AG04449 (cell line): ENCODE measurements at regions of chr6 and their contacts with region 1.

Region 1: GRCh38 chr6:139219271-139219729 is 72.5 kb downstream of the TXLNB start:
- DNase-seq: peak; percentile 82
- H3K4me3 ChIP-seq: no peak overlapping the region
- CTCF ChIP-seq: peak; percentile 94

Region 2: DNA sequence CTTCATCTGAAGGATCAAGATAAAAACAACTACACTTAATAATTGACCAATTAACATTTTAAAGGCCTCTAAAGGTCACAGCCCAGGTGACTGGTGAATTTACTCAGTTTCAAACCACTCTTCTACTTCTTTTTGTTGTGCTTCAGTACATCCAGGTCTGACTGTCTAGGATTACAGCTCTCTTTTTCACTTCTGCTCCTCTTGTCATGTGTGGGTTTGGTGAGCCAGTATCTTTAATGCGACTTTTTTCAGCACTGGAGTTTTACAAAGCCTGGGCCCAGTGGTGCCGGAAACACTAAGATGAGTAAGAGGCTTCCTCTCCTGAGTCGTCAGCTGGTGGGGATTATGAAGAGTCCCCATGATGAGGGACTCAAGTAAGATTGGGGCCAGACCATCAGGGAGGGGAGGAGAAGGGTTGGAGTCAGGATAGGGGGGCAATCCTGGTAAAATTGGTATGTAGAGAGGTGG is 57.4 kb before region 1 on chr6:
- CTCF ChIA-PET with region 1: no interaction called
- POLR2A ChIA-PET with region 1: no interaction called
- DNase-seq: no peak
- H3K4me3 ChIP-seq: no peak overlapping the region
- CTCF ChIP-seq: no peak

Region 3: GRCh38 chr6:139230391-139230840 is 11.1 kb after region 1 on chr6:
- CTCF ChIA-PET with region 1: interaction called, 12 read pairs
- POLR2A ChIA-PET with region 1: interaction called, 3 read pairs
- DNase-seq: peak; percentile 4
- H3K4me3 ChIP-seq: no peak overlapping the region
- CTCF ChIP-seq: no peak

Region 4: DNA sequence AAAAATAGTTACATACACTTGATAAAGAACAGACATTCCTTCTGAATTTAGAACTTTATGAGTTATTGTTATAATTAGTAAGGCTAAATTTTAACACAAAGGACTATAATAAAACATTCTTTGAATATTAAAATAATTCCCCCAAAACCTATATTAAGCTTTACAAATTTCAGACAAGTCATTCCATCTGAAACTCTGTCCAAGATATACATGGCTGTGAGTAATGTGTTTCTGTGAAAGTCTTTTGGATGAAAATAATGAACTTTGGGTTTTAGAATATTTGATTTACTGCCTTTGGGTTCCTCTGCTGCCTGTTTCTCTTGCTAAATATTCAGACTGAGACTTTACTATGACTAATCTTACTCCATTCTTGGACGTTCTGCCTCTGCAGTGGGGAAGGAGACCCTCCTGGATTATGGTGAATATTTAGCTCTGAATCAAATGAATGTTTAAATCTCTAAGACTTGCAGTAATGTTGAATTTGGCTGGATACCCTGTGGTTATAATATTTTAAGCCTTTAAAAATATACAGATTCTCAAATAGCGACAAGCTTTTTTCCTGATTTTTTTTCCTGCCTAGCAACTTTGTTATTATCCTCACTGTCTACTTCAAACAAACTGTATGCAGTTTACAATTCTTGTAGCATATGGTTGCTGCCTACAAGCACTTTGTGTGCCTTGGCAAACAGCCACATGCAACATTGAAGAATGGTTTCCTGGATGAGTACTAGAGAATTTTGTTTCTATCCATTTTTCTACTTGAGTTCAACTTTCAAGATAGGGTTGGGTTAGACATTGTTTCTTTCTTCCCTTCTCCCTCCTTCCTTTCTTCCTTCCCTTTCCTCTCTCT is 21.1 kb after region 1 on chr6:
- CTCF ChIA-PET with region 1: interaction called, 13 read pairs
- POLR2A ChIA-PET with region 1: no interaction called
- DNase-seq: peak; percentile 78
- H3K4me3 ChIP-seq: no peak overlapping the region
- CTCF ChIP-seq: no peak

Region 5: GRCh38 chr6:139290787-139291311 is 71.5 kb after region 1 on chr6:
- CTCF ChIA-PET with region 1: no interaction called
- POLR2A ChIA-PET with region 1: no interaction called
- DNase-seq: no peak
- H3K4me3 ChIP-seq: no peak overlapping the region
- CTCF ChIP-seq: no peak